HAP-1 (cell line): ENCODE measurements at regions of chr3 and their contacts with region 1.

Region 1: DNA sequence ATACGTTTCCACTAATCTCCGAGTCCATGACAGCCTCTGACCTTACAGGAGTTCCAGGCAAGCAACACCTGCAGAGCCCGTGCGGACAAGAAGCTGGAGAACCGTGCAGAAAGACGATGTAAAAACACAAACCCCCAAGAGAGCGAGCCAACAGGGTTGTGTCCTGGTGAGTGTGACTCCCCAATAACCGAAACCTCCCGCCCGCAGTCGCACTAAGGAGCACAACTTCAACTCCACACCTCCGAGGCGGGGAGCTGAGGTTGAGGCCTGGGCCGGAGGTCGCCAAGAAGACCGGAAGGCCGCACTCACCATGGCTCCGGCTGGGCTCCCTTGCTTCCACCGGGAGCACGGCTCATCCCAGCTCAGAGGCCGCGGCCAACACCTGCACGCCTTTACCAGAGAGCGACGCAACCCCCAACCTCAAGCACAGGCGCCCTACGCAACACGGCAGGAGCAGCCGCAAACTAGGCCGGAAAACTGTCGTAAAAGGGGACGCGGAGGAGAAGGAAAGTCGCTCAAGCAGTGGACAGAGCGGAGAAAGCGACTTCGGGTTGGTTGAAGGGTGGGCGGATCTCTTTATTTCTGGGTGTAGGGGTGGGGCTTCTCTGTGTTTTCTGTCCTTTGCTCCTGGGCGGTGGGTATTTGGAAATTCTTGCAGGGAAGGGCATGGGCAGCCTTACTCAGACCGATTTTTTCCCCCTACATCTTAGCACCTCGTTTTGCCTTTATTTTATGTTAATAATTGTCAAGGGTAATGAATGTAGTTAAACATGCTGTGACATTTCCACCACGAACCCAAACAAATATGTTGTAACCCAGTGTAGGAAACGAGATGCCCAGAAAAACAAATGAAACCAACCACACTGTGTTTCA is at the start of gene DNAJC19:
- DNase-seq: peak; percentile 90 to 95
- H3K4me3 ChIP-seq: peak within 1 kb of the TSS; percentile 75
- H3K4me1 ChIP-seq: peaks cover 7% of the 10 kb centered on the region
- H3K27me3 ChIP-seq: 0 out of 2 replicates have a peak, but pooled peaks cover 3% of the 10 kb centered on the region

Region 2: DNA sequence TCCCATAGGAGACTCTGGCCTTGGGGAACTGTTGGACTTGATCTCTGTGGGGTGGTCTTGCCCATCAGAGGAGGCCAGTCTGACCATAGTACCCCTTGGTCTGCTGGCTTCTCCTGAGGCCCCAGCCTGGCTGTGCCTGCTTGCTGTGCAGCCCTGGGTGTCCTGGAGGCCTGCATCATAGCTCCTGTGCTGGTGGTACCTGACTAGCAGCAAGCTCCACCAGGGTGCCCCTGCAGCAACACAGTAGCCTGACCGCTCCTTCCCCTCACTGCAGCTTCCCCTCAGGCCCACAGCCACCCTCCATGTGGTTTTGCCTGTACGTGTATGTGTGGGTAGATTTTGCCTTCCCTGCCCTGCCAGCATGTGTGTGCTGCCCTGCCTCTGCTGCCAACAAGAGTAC is 473.2 kb before region 1 on chr3:
- in situ Hi-C with region 1: no loop called
- DNase-seq: no peak
- H3K4me3 ChIP-seq: no peak overlapping the region
- H3K4me1 ChIP-seq: no peaks in the 10 kb centered on the region
- H3K27me3 ChIP-seq: peaks cover 4% of the 10 kb centered on the region; the same call in 1 of the 2 replicates

Region 3: GRCh38 chr3:181176601-181177000 is 187.1 kb after region 1 on chr3:
- in situ Hi-C with region 1: loop called (anchors 10 kb)
- DNase-seq: peak; percentile 59 to 81
- H3K4me3 ChIP-seq: no peak overlapping the region
- H3K4me1 ChIP-seq: peaks cover 6% of the 10 kb centered on the region
- H3K27me3 ChIP-seq: peaks cover 3% of the 10 kb centered on the region

Region 4: GRCh38 chr3:181292984-181293383 is 303.5 kb after region 1 on chr3:
- in situ Hi-C with region 1: no loop called
- DNase-seq: no peak
- H3K4me3 ChIP-seq: no peak overlapping the region
- H3K4me1 ChIP-seq: no peaks in the 10 kb centered on the region
- H3K27me3 ChIP-seq: peaks cover 28% of the 10 kb centered on the region